ENCODE measurements at regions of chr11 and their contacts with region 1.

Region 1: GRCh38 chr11:110296226-110297075 is at the start of gene RDX:
- DNase-seq: peak; percentile 39 to 61 (median 51)
- H3K4me3 ChIP-seq: peak within 1 kb of the TSS; percentile 61 to 62
- H3K4me3 Mint-ChIP-seq: peak within 1 kb of the TSS; percentile 87 to 94 (median 92)
- H3K27ac ChIP-seq: peak within 1 kb of the TSS; percentile 70
- H3K27ac Mint-ChIP-seq: peak within 1 kb of the TSS; percentile 22 to 94 (median 77)
- H3K4me1 ChIP-seq: peaks cover 44% of the 10 kb centered on the region
- H3K4me1 Mint-ChIP-seq: peaks cover 15 to 41% (median 27%) of the 10 kb centered on the region in 4 donors
- H3K27me3 ChIP-seq: no peaks in the 10 kb centered on the region
- H3K27me3 Mint-ChIP-seq: no peaks in the 10 kb centered on the region
- total RNA-seq, gene RDX: 22.4 to 26.5 TPM

Region 2: GRCh38 chr11:110230377-110230776 is 66.1 kb before region 1 on chr11:
- CTCF ChIA-PET with region 1: no interaction called
- POLR2A ChIA-PET with region 1: no interaction called
- intact Hi-C with region 1: no loop called
- DNase-seq: no peak
- H3K4me3 ChIP-seq: no peak overlapping the region
- H3K4me3 Mint-ChIP-seq: no peak overlapping the region
- H3K27ac ChIP-seq: no peak overlapping the region
- H3K27ac Mint-ChIP-seq: peak overlapping the region in 1 of 7 donors; percentile 3
- H3K4me1 ChIP-seq: no peaks in the 10 kb centered on the region
- H3K4me1 Mint-ChIP-seq: no peaks in the 10 kb centered on the region
- H3K27me3 ChIP-seq: no peaks in the 10 kb centered on the region
- H3K27me3 Mint-ChIP-seq: no peaks in the 10 kb centered on the region

Region 3: GRCh38 chr11:110251837-110252236 is 44.6 kb before region 1 on chr11:
- CTCF ChIA-PET with region 1: no interaction called
- POLR2A ChIA-PET with region 1: no interaction called
- intact Hi-C with region 1: loop called (anchors 5 kb)
- DNase-seq: no peak
- H3K4me3 ChIP-seq: no peak overlapping the region
- H3K4me3 Mint-ChIP-seq: no peak overlapping the region
- H3K27ac ChIP-seq: no peak overlapping the region
- H3K27ac Mint-ChIP-seq: peak overlapping the region in 2 of 7 donors; percentile 22 to 36
- H3K4me1 ChIP-seq: no peaks in the 10 kb centered on the region
- H3K4me1 Mint-ChIP-seq: peaks cover 0 to 2% (median under 1%) of the 10 kb centered on the region in 4 donors
- H3K27me3 ChIP-seq: no peaks in the 10 kb centered on the region
- H3K27me3 Mint-ChIP-seq: no peaks in the 10 kb centered on the region

Region 4: GRCh38 chr11:110327508-110327907 is 31.1 kb after region 1 on chr11:
- CTCF ChIA-PET with region 1: no interaction called
- POLR2A ChIA-PET with region 1: interaction called, 3 read pairs
- intact Hi-C with region 1: loop called (anchors 1 kb)
- DNase-seq: no peak
- H3K4me3 ChIP-seq: no peak overlapping the region
- H3K4me3 Mint-ChIP-seq: peak overlapping the region; percentile 43 to 94 (median 78)
- H3K27ac ChIP-seq: no peak overlapping the region
- H3K27ac Mint-ChIP-seq: peak overlapping the region in 5 of 7 donors; percentile 3 to 95 (median 69)
- H3K4me1 ChIP-seq: peaks cover 6% of the 10 kb centered on the region
- H3K4me1 Mint-ChIP-seq: peaks cover 11 to 23% (median 18%) of the 10 kb centered on the region in 4 donors
- H3K27me3 ChIP-seq: no peaks in the 10 kb centered on the region
- H3K27me3 Mint-ChIP-seq: peaks cover 0 to 2% of the 10 kb centered on the region in 2 donors

Region 5: GRCh38 chr11:110349138-110349996 is 52.9 kb after region 1 on chr11:
- CTCF ChIA-PET with region 1: no interaction called
- POLR2A ChIA-PET with region 1: interaction called, 5 read pairs
- intact Hi-C with region 1: loop called (anchors 5 kb)
- DNase-seq: peak in 1 of 5 donors; percentile 4
- H3K4me3 ChIP-seq: peak overlapping the region in 1 of 2 donors; percentile 5
- H3K4me3 Mint-ChIP-seq: peak overlapping the region; percentile 25 to 85 (median 68)
- H3K27ac ChIP-seq: no peak overlapping the region
- H3K27ac Mint-ChIP-seq: peak overlapping the region; percentile 47 to 85 (median 81)
- H3K4me1 ChIP-seq: peaks cover 42% of the 10 kb centered on the region
- H3K4me1 Mint-ChIP-seq: peaks cover 29 to 44% (median 31%) of the 10 kb centered on the region in 4 donors
- H3K27me3 ChIP-seq: no peaks in the 10 kb centered on the region
- H3K27me3 Mint-ChIP-seq: no peaks in the 10 kb centered on the region

Measured in CD4-positive, alpha-beta memory T cell (primary cell).